CD8-positive, alpha-beta T cell (primary cell): ENCODE measurements at regions of chr3 and their contacts with region 1.

Region 1: GRCh38 chr3:142987080-142987700 is 14.2 kb upstream of the U2SURP start:
- DNase-seq: peak in 2 of 9 experiments; percentile 40 to 59
- ATAC-seq: peak; percentile 62
- H3K4me3 ChIP-seq: no peak overlapping the region
- H3K4me3 Mint-ChIP-seq: no peak overlapping the region
- H3K27ac ChIP-seq: no peak overlapping the region
- H3K27ac Mint-ChIP-seq: no peak overlapping the region
- H3K4me1 ChIP-seq: no peaks in the 10 kb centered on the region
- H3K4me1 Mint-ChIP-seq: no peaks in the 10 kb centered on the region
- H3K27me3 ChIP-seq: peaks cover 0 to 3% of the 10 kb centered on the region in 2 experiments
- H3K27me3 Mint-ChIP-seq: peaks cover 10% of the 10 kb centered on the region
- CTCF ChIP-seq: peak; percentile 86

Region 2: GRCh38 chr3:142106548-142106947 is 880.6 kb before region 1 on chr3:
- CTCF ChIA-PET with region 1: no interaction called
- POLR2A ChIA-PET with region 1: no interaction called
- intact Hi-C with region 1: no loop called
- DNase-seq: no peak
- ATAC-seq: no peak
- H3K4me3 ChIP-seq: no peak overlapping the region
- H3K4me3 Mint-ChIP-seq: no peak overlapping the region
- H3K27ac ChIP-seq: no peak overlapping the region
- H3K27ac Mint-ChIP-seq: no peak overlapping the region
- H3K4me1 ChIP-seq: no peaks in the 10 kb centered on the region
- H3K4me1 Mint-ChIP-seq: peaks cover 6% of the 10 kb centered on the region
- H3K27me3 ChIP-seq: no peaks in the 10 kb centered on the region
- H3K27me3 Mint-ChIP-seq: peaks cover 2% of the 10 kb centered on the region
- CTCF ChIP-seq: no peak

Region 3: GRCh38 chr3:142129516-142130171 is 857.5 kb before region 1 on chr3:
- CTCF ChIA-PET with region 1: no interaction called
- POLR2A ChIA-PET with region 1: no interaction called
- intact Hi-C with region 1: loop called in 1 of 2 experiments (anchors 5 kb)
- DNase-seq: no peak
- ATAC-seq: no peak
- H3K4me3 ChIP-seq: no peak overlapping the region
- H3K4me3 Mint-ChIP-seq: no peak overlapping the region
- H3K27ac ChIP-seq: peak overlapping the region in 1 of 2 experiments; percentile 63
- H3K27ac Mint-ChIP-seq: no peak overlapping the region
- H3K4me1 ChIP-seq: no peaks in the 10 kb centered on the region
- H3K4me1 Mint-ChIP-seq: peaks cover 3% of the 10 kb centered on the region
- H3K27me3 ChIP-seq: no peaks in the 10 kb centered on the region
- H3K27me3 Mint-ChIP-seq: no peaks in the 10 kb centered on the region
- CTCF ChIP-seq: no peak

Region 4: GRCh38 chr3:142586803-142587406 is 400.3 kb before region 1 on chr3:
- CTCF ChIA-PET with region 1: interaction called, 12 read pairs
- POLR2A ChIA-PET with region 1: no interaction called
- intact Hi-C with region 1: loop called (anchors 1 to 2 kb)
- DNase-seq: peak in 3 of 9 experiments; percentile 26 to 72 (median 62)
- ATAC-seq: peak; percentile 68
- H3K4me3 ChIP-seq: no peak overlapping the region
- H3K4me3 Mint-ChIP-seq: no peak overlapping the region
- H3K27ac ChIP-seq: no peak overlapping the region
- H3K27ac Mint-ChIP-seq: no peak overlapping the region
- H3K4me1 ChIP-seq: no peaks in the 10 kb centered on the region
- H3K4me1 Mint-ChIP-seq: no peaks in the 10 kb centered on the region
- H3K27me3 ChIP-seq: no peaks in the 10 kb centered on the region
- H3K27me3 Mint-ChIP-seq: peaks cover 14% of the 10 kb centered on the region
- CTCF ChIP-seq: peak; percentile 60